ENCODE measurements at regions of chr14 and their contacts with region 1.

Region 1: GRCh38 chr14:69685716-69686115 is 74.3 kb downstream of the SUSD6 start:
- DNase-seq: peak; percentile 62
- ATAC-seq: peak; percentile 73
- H3K4me3 ChIP-seq: no peak overlapping the region
- H3K27ac ChIP-seq: peak overlapping the region; percentile 62
- H3K4me1 ChIP-seq: peaks cover 91% of the 10 kb centered on the region
- H3K27me3 ChIP-seq: no peaks in the 10 kb centered on the region
- CTCF ChIP-seq: no peak
- EP300 ChIP-seq: peak in 1 of 2 experiments; percentile 37; a peak in 1 of 4 replicates
- POLR2A ChIP-seq: no peak
- RAD21 ChIP-seq: no peak

Region 2: GRCh38 chr14:69543341-69544249 is 142.1 kb before region 1 on chr14:
- CTCF ChIA-PET with region 1: no interaction called
- POLR2A ChIA-PET with region 1: no interaction called
- in situ Hi-C with region 1: no loop called
- intact Hi-C with region 1: no loop called
- DNase-seq: no peak
- ATAC-seq: peak; percentile 59
- H3K4me3 ChIP-seq: no peak overlapping the region
- H3K27ac ChIP-seq: no peak overlapping the region
- H3K4me1 ChIP-seq: no peaks in the 10 kb centered on the region
- H3K27me3 ChIP-seq: peaks cover 2 to 19% of the 10 kb centered on the region in 2 experiments; a peak in 3 of 5 replicates
- CTCF ChIP-seq: no peak
- EP300 ChIP-seq: no peak
- POLR2A ChIP-seq: no peak
- RAD21 ChIP-seq: no peak

Region 3: GRCh38 chr14:69625299-69626131 is 60.2 kb before region 1 on chr14:
- CTCF ChIA-PET with region 1: no interaction called
- POLR2A ChIA-PET with region 1: no interaction called
- in situ Hi-C with region 1: no loop called
- intact Hi-C with region 1: no loop called
- DNase-seq: no peak
- ATAC-seq: no peak; the same call in 2 of the 3 replicates
- H3K4me3 ChIP-seq: no peak overlapping the region
- H3K27ac ChIP-seq: no peak overlapping the region
- H3K4me1 ChIP-seq: peaks cover 35% of the 10 kb centered on the region
- H3K27me3 ChIP-seq: no peaks in the 10 kb centered on the region
- CTCF ChIP-seq: no peak
- EP300 ChIP-seq: no peak
- POLR2A ChIP-seq: no peak
- RAD21 ChIP-seq: no peak

Region 4: GRCh38 chr14:69657950-69658355 is 27.8 kb before region 1 on chr14:
- CTCF ChIA-PET with region 1: no interaction called
- POLR2A ChIA-PET with region 1: no interaction called
- in situ Hi-C with region 1: no loop called
- intact Hi-C with region 1: loop called (anchors 1 kb)
- DNase-seq: peak; percentile 63
- ATAC-seq: peak; percentile 90
- H3K4me3 ChIP-seq: peak overlapping the region; percentile 38 to 59 (median 41)
- H3K27ac ChIP-seq: peak overlapping the region; percentile 67
- H3K4me1 ChIP-seq: peaks cover 82% of the 10 kb centered on the region
- H3K27me3 ChIP-seq: no peaks in the 10 kb centered on the region
- CTCF ChIP-seq: no peak
- EP300 ChIP-seq: no peak
- POLR2A ChIP-seq: no peak
- RAD21 ChIP-seq: no peak